BJ (cell line): ENCODE measurements at regions of chr2 and their contacts with region 1.

Region 1: GRCh38 chr2:37795938-37796337 is 124.5 kb upstream of the CDC42EP3 start:
- DNase-seq: peak; percentile 74
- H3K4me3 ChIP-seq: no peak overlapping the region
- H3K27me3 ChIP-seq: no peaks in the 10 kb centered on the region
- CTCF ChIP-seq: no peak

Region 2: GRCh38 chr2:37753758-37754157 is 42.2 kb before region 1 on chr2:
- CTCF ChIA-PET with region 1: interaction called, 10 read pairs
- POLR2A ChIA-PET with region 1: no interaction called
- DNase-seq: no peak
- H3K4me3 ChIP-seq: no peak overlapping the region
- H3K27me3 ChIP-seq: no peaks in the 10 kb centered on the region
- CTCF ChIP-seq: no peak

Region 3: GRCh38 chr2:37832590-37833197 is 36.8 kb after region 1 on chr2:
- CTCF ChIA-PET with region 1: interaction called, 9 read pairs
- POLR2A ChIA-PET with region 1: interaction called, 12 read pairs
- DNase-seq: no peak
- H3K4me3 ChIP-seq: no peak overlapping the region
- H3K27me3 ChIP-seq: no peaks in the 10 kb centered on the region
- CTCF ChIP-seq: peak; percentile 74

Region 4: DNA sequence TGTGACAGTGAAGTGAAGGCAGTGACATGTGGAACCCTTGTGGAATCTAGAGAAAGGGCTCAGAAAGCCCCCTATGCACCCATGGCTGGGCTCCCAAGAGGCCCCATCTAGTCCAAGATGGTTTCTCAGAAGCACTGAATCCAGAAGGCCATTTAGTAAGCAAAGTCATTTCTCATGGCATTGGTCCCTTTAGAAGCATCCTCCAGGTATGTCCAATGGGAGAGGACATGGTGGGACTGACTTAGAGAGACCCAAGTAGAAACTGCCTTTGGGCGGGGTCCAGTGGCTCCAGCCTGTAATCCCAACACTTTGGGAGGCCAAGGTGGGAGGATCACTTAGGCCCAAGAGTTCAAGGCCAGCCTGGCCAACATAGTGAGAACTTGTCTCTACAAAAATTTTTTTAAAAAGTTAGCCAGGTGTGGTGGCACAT is 56.7 kb after region 1 on chr2:
- CTCF ChIA-PET with region 1: no interaction called
- POLR2A ChIA-PET with region 1: interaction called, 27 read pairs
- DNase-seq: no peak
- H3K4me3 ChIP-seq: no peak overlapping the region
- H3K27me3 ChIP-seq: no peaks in the 10 kb centered on the region
- CTCF ChIP-seq: no peak